ENCODE measurements at regions of chr11 and their contacts with region 1.

Region 1: DNA sequence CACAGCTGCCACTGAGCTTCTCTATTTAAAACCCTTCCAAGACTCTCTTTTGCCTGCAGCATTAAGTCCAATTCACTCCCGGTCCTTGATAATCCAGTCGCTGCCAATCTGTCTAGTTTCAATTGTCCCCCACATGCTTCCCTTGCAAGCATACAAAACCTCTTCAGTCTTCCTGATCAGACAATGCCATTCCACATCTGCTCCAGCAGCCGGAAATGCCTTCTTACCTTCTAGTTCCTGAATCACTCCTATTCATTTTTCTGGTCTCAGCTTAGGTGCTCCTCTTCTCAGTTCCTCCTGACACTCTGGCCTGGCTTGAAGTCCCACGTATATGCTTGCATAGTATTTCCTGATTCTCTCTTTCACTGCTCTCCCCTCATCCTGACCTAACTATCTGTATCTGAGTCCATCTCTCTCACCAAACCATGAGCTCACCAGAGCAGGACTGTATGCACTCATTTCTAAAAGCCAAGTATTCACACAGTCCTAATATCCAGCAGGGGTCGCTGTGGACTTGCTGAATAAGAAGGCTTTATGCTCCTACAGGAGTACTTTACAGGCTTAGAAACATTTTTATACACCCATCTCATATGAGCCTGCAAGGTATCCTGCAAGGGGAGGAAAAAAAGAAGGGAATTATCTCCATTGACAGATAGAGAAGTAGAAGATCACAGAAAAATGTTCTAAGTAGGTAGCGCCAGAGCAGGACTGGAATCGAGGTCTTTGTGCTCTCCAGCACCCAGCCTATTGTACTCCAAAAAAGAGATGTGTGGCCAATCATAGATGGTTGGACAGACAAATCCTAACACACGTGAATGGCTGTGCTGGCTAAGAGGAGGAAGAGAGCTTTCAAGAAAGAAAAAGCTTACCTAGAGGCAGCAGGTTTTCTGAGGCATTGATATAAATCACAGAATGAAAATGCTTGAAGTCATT is 19.2 kb downstream of the XRRA1 start:
- DNase-seq: peak in 1 of 2 donors; percentile 74
- ATAC-seq: peak; percentile 78 to 89 (median 85)
- H3K4me3 ChIP-seq: no peak overlapping the region
- H3K27ac ChIP-seq: no peak overlapping the region
- H3K4me1 ChIP-seq: no peaks in the 10 kb centered on the region
- H3K27me3 ChIP-seq: no peaks in the 10 kb centered on the region
- CTCF ChIP-seq: peak; percentile 75 to 91 (median 85)

Region 2: GRCh38 chr11:75031771-75032549 is 102.3 kb after region 1 on chr11:
- intact Hi-C with region 1: loop called (anchors 1 to 5 kb)
- DNase-seq: peak; percentile 70 to 74
- ATAC-seq: peak; percentile 63 to 82 (median 78)
- H3K4me3 ChIP-seq: no peak overlapping the region
- H3K27ac ChIP-seq: peak overlapping the region in 1 of 10 donors; percentile 9
- H3K4me1 ChIP-seq: peaks cover 0 to 12% (median 0%) of the 10 kb centered on the region in 9 donors
- H3K27me3 ChIP-seq: no peaks in the 10 kb centered on the region
- CTCF ChIP-seq: peak; percentile 50 to 76 (median 72)

Region 3: DNA sequence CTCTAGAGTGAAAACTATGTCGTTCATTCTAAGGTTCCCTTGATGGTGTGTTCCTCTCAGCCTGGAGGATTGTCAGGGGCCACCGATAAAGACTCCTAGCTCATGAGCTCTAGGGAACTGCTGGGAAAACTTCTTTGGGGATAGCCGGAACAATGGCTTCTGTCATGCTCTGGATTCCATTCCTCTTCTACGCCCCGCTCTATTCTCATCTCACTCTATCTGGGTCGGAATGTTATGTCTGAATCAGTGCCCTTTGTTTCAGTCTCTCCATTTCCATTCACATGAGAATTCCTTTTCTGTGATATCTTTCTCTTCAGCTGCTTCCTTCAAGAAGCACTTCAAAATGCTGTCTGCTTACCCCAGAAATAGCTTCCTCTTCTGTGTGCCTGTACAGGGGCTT is 204.3 kb after region 1 on chr11:
- intact Hi-C with region 1: loop called in 2 of 10 experiments (anchors 10 kb)
- DNase-seq: no peak
- ATAC-seq: no peak
- H3K4me3 ChIP-seq: no peak overlapping the region
- H3K27ac ChIP-seq: no peak overlapping the region
- H3K4me1 ChIP-seq: no peaks in the 10 kb centered on the region
- H3K27me3 ChIP-seq: peaks cover 0 to 75% (median 39%) of the 10 kb centered on the region in 7 donors
- CTCF ChIP-seq: no peak